Dorsolateral prefrontal cortex (tissue), 120 donors: ENCODE measurements at regions of chr3 and their contacts with region 1.

Region 1: GRCh38 chr3:120567370-120568201 is 28.6 kb upstream of the NDUFB4 start:
- DNase-seq: peak in 2 of 10 donors; percentile 49 to 54
- H3K4me3 ChIP-seq: peak overlapping the region in 36 of 59 donors; percentile 1 to 50 (median 26)
- H3K27ac ChIP-seq: peak overlapping the region; percentile 29 to 92 (median 82)
- H3K27me3 ChIP-seq: no peaks in the 10 kb centered on the region
- CTCF ChIP-seq: peak in 55 of 56 donors; percentile 25 to 69 (median 50)

Region 2: DNA sequence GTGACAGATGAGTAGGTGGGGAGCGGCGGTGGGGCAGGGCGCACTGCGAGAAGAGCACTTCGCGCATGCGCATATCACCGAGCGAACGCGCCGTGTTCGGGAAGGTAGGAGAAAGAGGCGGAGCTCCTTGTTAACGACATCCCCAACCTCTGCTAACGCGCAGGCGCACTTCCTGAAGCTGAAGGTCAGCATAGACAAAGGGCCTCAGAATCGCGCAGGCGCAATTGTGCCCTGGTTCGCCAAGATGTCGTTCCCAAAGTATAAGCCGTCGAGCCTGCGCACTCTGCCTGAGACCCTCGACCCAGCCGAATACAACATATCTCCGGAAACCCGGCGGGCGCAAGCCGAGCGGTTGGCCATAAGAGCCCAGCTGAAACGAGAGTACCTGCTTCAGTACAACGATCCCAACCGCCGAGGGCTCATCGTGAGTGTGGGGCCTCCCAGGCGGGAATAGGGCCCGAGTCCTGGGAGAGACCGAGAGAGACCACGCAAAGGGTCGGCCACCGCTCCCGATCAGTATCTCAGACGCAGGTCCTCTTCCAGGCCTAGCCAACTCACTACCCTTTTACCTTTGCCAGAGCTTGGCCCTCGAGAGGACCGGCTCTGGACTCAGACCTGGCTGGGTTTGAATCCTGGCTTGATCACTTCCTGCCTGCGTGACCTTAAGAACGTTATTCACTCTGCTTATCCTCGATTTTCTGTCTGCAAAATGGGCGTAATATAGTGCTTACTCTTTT is 28.7 kb after region 1 on chr3 and contains the start of gene NDUFB4:
- intact Hi-C with region 1: loop called in 1 of 2 experiments (anchors 1 kb)
- DNase-seq: peak; percentile 94 to 98 (median 96)
- H3K4me3 ChIP-seq: peak within 1 kb of the TSS; percentile 61 to 100 (median 91)
- H3K27ac ChIP-seq: peak within 1 kb of the TSS; percentile 70 to 97 (median 93)
- H3K27me3 ChIP-seq: no peaks in the 10 kb centered on the region
- CTCF ChIP-seq: peak in 22 of 56 donors; percentile 8 to 53 (median 24)
- total RNA-seq, gene NDUFB4: 75.5 to 170 (median 127) TPM

Region 3: DNA sequence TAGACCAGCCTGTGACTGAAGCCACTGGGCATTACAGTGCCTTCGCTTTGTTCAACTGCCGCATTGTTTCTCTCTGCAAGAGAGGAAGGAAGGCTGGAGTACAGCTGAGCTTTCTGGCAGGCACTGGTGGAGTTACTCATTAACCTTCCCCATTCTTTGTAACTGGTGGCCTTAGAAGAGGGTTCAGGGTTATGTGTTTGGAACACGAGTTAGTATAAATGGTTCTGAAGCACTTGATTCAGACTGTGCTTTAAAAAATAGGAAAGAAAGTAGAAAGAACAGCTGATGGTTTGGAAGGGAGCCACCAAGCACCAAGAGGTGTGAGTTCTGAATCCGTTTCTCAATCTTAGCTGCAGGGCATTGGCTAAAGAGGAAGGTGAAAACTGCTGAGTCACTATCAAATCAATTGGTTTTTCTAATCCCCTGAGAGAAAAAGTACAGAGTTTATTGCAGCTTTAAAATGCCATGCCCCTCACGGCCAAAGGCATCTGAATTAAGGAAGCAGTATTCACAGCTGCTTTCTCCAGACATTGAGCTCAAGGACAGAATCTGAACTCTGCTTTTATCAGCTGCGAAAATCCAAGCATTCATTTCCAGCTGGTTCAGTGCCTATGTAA is 110.9 kb after region 1 on chr3:
- intact Hi-C with region 1: loop called in 1 of 2 experiments (anchors 5 kb)
- DNase-seq: peak in 4 of 10 donors; percentile 21 to 52 (median 36)
- H3K4me3 ChIP-seq: peak overlapping the region in 30 of 59 donors; percentile 1 to 47 (median 16)
- H3K27ac ChIP-seq: peak overlapping the region in 56 of 59 donors; percentile 2 to 86 (median 62)
- H3K27me3 ChIP-seq: no peaks in the 10 kb centered on the region
- CTCF ChIP-seq: no peak